Right cardiac atrium (tissue), 5 donors: ENCODE measurements at regions of chr4 and their contacts with region 1.

Region 1: GRCh38 chr4:185210102-185210981 is 944 bp downstream of the SNX25 start:
- DNase-seq: peak; percentile 65 to 82 (median 80)
- ATAC-seq: peak; percentile 56 to 60
- H3K4me3 ChIP-seq: peak overlapping the region; percentile 96
- H3K27ac ChIP-seq: peak overlapping the region; percentile 90
- H3K4me1 ChIP-seq: no peaks in the 10 kb centered on the region
- H3K27me3 ChIP-seq: no peaks in the 10 kb centered on the region

Region 2: GRCh38 chr4:185096032-185096653 is 114.2 kb before region 1 on chr4:
- intact Hi-C with region 1: no loop called
- DNase-seq: no peak
- ATAC-seq: no peak
- H3K4me3 ChIP-seq: no peak overlapping the region
- H3K27ac ChIP-seq: no peak overlapping the region
- H3K4me1 ChIP-seq: no peaks in the 10 kb centered on the region
- H3K27me3 ChIP-seq: no peaks in the 10 kb centered on the region

Region 3: GRCh38 chr4:185282968-185283367 is 72.6 kb after region 1 on chr4:
- intact Hi-C with region 1: loop called in 1 of 4 experiments (anchors 10 kb)
- DNase-seq: no peak
- ATAC-seq: no peak
- H3K4me3 ChIP-seq: no peak overlapping the region
- H3K27ac ChIP-seq: no peak overlapping the region
- H3K4me1 ChIP-seq: no peaks in the 10 kb centered on the region
- H3K27me3 ChIP-seq: no peaks in the 10 kb centered on the region

Region 4: DNA sequence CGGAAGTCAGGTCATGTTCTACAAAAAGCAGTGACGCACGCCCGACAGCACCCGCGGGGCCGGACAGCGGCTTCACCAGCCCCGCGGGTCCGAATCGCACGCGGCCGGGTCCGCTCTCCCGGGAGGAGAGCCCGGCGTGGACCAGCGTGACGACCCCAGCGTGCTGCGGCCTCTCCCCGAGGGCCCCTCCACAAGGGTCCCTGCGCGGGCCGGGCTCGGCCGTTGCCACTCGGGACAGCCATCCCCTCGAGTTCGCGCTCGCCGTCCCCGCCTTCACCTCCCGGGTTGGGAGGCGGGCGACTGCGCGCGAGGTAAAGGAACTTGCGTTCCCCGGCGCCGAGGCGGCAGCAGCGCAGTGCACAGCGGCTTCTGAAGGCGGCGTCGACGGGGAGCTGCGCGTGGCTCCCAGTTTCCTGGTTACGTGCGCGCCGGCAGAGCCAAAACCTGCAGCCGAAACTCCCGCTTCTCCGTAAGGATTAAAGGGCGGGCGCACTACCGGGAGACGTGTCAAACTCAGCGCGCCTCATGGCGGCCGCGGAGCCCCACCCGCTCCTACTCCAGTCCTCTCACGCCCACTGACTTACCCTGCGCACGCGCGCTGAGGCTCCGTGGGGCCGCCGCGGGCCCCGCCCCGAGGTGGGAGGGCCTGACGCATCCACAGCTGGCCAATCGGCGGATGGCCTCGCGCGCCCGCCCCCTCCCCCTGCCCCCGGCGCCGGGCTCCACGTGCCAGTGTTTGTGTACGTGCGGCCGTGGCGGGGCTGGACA is 185.8 kb after region 1 on chr4:
- intact Hi-C with region 1: loop called in 2 of 4 experiments (anchors 10 kb)
- DNase-seq: peak; percentile 97 to 99 (median 99)
- ATAC-seq: peak; percentile 97 to 99
- H3K4me3 ChIP-seq: peak overlapping the region; percentile 63
- H3K27ac ChIP-seq: peak overlapping the region; percentile 96
- H3K4me1 ChIP-seq: no peaks in the 10 kb centered on the region
- H3K27me3 ChIP-seq: no peaks in the 10 kb centered on the region

Region 5: GRCh38 chr4:185479507-185479971 is 269.2 kb after region 1 on chr4:
- intact Hi-C with region 1: no loop called
- DNase-seq: no peak
- ATAC-seq: no peak
- H3K4me3 ChIP-seq: no peak overlapping the region
- H3K27ac ChIP-seq: no peak overlapping the region
- H3K4me1 ChIP-seq: peaks cover 3% of the 10 kb centered on the region
- H3K27me3 ChIP-seq: no peaks in the 10 kb centered on the region